ENCODE measurements at regions of chr4 and their contacts with region 1.

Region 1: GRCh38 chr4:123661080-123661737 is 264.6 kb downstream of the SPRY1 start:
- DNase-seq: peak; percentile 49
- H3K4me3 ChIP-seq: no peak overlapping the region
- H3K27ac ChIP-seq: no peak overlapping the region
- H3K4me1 ChIP-seq: no peaks in the 10 kb centered on the region
- H3K27me3 ChIP-seq: no peaks in the 10 kb centered on the region
- CTCF ChIP-seq: peak; percentile 27 to 37
- POLR2A ChIP-seq: no peak

Region 2: DNA sequence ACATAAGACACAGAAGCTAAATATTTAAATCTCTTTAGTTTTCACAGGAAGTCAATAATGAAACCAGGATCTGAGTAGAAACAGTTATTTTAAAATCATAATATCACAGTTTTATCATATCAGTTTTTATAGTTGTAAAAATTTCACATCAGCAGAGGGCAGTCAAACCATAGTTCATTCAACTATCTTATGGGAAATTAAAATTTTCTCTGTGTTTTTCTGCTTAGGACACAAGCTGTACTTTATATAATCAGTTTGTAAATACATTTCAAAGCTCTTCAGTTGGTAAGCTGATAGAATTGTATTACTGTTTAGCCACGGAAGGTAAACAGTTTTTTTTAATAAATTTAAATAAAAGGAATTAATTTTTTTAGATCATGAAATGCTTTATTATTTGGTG is 534.0 kb before region 1 on chr4:
- CTCF ChIA-PET with region 1: interaction called, 49 read pairs
- POLR2A ChIA-PET with region 1: no interaction called
- dilution Hi-C with region 1: no loop called
- intact Hi-C with region 1: loop called (anchors 1 kb)
- DNase-seq: peak; percentile 67
- H3K4me3 ChIP-seq: no peak overlapping the region
- H3K27ac ChIP-seq: peak overlapping the region; percentile 65
- H3K4me1 ChIP-seq: peaks cover 19% of the 10 kb centered on the region
- H3K27me3 ChIP-seq: no peaks in the 10 kb centered on the region
- CTCF ChIP-seq: no peak
- POLR2A ChIP-seq: no peak

Region 3: DNA sequence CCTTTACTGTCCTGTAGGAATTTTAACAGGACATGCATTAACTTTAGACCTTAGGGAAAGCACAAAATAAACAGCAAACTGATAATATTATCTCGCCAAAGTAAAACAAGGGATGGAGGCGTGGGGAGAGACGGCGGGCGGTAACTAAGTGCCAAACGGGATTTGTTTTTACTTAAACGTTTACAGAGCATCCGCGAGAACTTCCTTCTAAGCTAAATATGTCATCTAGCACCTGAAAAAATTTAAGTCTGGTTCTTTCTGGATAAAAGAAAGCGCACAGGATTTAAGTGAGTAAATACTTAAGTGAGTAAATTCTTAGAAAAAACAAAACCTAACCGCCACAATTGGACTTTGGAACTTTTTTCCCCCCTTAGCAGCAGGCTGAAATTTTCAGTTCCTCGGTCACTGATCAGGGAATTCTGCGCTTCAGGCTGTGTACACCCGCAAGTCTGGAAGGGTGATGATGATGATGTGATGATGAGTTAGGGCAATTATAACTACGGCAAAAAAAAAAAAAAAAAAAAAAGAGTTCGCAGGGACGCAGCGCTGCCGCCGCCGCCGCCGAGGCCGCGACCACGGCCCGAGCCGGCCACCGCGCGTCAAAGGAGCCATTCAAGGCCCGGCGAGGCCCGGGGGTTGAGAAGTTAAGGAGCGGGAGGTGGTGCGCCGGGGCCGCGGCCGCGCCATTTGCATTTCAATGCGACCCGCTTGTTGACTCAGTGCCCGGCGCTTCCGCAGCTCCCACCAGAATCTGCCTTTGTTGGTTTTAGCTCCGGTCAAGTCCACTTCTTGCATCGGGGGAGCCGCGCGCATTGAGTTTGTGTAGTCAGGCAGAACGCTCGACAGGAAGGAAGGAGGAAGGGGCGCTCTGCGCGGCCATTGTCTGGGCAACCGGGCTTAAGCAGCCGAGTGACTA is 155.9 kb before region 1 on chr4:
- CTCF ChIA-PET with region 1: no interaction called
- POLR2A ChIA-PET with region 1: no interaction called
- dilution Hi-C with region 1: no loop called
- intact Hi-C with region 1: loop called (anchors 5 kb)
- DNase-seq: peak; percentile 74
- H3K4me3 ChIP-seq: peak overlapping the region; percentile 35 to 72 (median 61)
- H3K27ac ChIP-seq: peak overlapping the region; percentile 65
- H3K4me1 ChIP-seq: peaks cover 16% of the 10 kb centered on the region
- H3K27me3 ChIP-seq: no peaks in the 10 kb centered on the region
- CTCF ChIP-seq: no peak
- POLR2A ChIP-seq: no peak

Region 4: DNA sequence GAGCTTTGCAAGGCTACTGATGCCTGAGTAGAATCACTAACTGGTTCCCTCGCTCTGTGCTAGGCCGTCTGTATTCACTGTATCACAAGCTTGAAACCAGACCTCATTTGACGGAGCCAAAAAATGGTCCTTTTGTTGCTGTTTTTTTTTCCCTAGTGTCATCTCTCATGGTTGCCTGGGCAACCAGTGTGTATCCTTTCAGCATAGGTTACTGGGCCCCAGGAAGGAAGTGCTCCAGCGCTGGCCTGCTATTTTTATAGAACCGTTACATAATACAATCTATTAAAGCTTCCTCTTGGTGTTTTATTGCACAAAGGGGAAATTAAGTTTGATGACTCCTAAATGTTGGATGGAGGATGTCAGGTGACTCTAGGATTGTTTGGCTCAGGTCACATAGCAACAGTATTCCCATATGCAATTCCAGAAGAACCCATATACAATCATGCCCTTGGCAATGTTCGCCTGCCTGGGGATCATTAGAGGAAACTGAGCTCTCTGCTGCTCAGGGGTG is 44.2 kb before region 1 on chr4:
- CTCF ChIA-PET with region 1: no interaction called
- POLR2A ChIA-PET with region 1: no interaction called
- dilution Hi-C with region 1: no loop called
- intact Hi-C with region 1: loop called (anchors 1 kb)
- DNase-seq: peak; percentile 81
- H3K4me3 ChIP-seq: no peak overlapping the region
- H3K27ac ChIP-seq: no peak overlapping the region
- H3K4me1 ChIP-seq: peaks cover 19% of the 10 kb centered on the region
- H3K27me3 ChIP-seq: no peaks in the 10 kb centered on the region
- CTCF ChIP-seq: no peak
- POLR2A ChIP-seq: no peak

Region 5: GRCh38 chr4:123893011-123893981 is 232.1 kb after region 1 on chr4:
- CTCF ChIA-PET with region 1: no interaction called
- POLR2A ChIA-PET with region 1: no interaction called
- dilution Hi-C with region 1: no loop called
- intact Hi-C with region 1: loop called (anchors 5 kb)
- DNase-seq: peak; percentile 87
- H3K4me3 ChIP-seq: peak overlapping the region in 1 of 3 experiments; percentile 26
- H3K27ac ChIP-seq: peak overlapping the region; percentile 96
- H3K4me1 ChIP-seq: peaks cover 69% of the 10 kb centered on the region
- H3K27me3 ChIP-seq: no peaks in the 10 kb centered on the region
- CTCF ChIP-seq: no peak
- POLR2A ChIP-seq: peak; percentile 43

Region 6: GRCh38 chr4:124322234-124323065 is 661.2 kb after region 1 on chr4:
- CTCF ChIA-PET with region 1: no interaction called
- POLR2A ChIA-PET with region 1: no interaction called
- dilution Hi-C with region 1: no loop called
- intact Hi-C with region 1: loop called (anchors 5 kb)
- DNase-seq: peak; percentile 56
- H3K4me3 ChIP-seq: no peak overlapping the region
- H3K27ac ChIP-seq: no peak overlapping the region
- H3K4me1 ChIP-seq: no peaks in the 10 kb centered on the region
- H3K27me3 ChIP-seq: no peaks in the 10 kb centered on the region
- CTCF ChIP-seq: peak; percentile 14 to 25
- POLR2A ChIP-seq: no peak